ENCODE measurements at regions of chr12 and their contacts with region 1.

Region 1: DNA sequence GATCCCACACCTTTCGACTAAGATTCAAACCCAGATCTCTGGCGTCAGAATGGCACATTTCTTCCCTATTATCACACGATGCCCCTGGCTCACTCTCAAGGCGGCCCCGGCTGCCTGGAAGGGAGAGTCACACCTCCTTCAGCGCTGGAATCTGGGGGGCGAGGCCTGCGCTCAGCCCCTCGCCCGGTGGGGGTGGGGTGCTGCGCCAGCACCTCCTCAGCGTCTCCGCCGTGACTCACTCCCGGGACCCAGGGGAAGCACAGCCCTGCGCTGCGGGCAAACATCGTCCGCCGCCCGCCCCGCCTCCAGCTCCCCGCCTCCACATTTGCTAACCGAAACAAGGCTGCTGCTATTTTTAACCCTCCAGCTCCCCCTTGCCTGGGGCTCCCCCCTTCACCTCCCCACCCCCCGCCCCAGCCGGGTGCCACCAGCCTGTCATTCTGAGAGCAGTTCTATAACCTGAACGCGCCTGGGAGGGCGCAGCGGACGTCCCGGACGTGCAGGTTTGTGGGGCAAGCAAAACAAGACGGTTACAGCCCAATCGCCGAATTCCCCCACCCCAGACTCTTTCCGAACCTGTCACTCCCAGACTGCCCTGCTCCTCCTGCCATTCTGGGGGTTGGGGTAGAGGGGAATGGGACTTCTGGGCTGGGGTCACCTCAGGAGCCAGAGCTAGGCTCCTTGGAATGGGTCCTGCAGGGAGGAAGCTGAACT is 6.7 kb downstream of the HDAC7 start:
- H3K4me3 ChIP-seq: peak overlapping the region; percentile 28
- H3K27ac ChIP-seq: peak overlapping the region; percentile 66
- H3K4me1 ChIP-seq: peaks cover 27% of the 10 kb centered on the region
- CTCF ChIP-seq: no peak

Region 2: DNA sequence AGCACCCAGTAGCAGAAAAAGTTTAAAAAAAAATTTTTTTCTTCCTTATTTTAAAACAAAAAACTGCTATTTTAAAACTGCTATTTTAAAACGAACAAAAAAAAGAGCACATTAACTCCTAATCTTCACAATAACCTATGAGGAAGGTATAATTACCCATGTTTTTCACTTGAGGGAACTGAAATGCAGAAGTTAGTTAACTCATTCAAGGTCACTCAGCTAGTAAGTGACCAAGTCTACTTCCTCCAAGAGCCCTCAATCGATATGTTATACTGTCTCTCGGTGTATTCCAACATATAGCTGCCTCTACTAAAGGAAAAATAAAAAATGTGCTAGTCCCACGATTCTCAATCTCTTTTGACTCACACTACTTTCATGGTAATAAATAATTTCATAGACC is 114.9 kb before region 1 on chr12:
- CTCF ChIA-PET with region 1: no interaction called
- POLR2A ChIA-PET with region 1: no interaction called
- H3K4me3 ChIP-seq: no peak overlapping the region
- H3K27ac ChIP-seq: no peak overlapping the region
- H3K4me1 ChIP-seq: no peaks in the 10 kb centered on the region
- CTCF ChIP-seq: no peak

Region 3: DNA sequence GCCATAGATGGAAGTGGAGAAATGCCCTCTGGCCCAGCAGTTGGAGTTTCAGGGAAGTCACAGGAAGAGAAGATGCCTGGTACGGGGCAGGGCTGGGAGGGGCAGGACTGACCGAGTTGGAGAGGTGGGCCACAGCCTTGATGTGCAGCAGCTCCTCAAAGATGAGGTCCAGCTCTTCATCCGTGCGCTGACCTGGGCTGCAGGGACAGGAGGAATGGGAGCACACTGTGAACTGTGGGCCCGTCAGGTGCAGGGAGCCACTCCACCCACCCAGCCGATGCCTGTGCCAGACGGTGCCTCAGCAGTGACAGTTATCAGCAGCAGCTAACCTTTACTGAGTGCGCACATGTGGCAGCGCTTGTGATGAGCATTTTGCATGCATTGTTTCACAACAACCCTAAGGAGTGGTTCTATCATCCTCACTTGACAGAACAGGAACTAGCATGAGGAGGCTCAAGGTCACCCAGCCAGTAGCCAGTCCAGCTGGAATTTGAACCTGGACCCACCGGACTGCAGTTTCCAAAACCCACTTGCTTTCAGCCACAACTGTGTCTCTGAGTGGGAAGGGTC is 62.6 kb before region 1 on chr12:
- CTCF ChIA-PET with region 1: no interaction called
- POLR2A ChIA-PET with region 1: no interaction called
- H3K4me3 ChIP-seq: no peak overlapping the region
- H3K27ac ChIP-seq: no peak overlapping the region
- H3K4me1 ChIP-seq: peaks cover 4% of the 10 kb centered on the region; the same call in 1 of the 2 replicates
- CTCF ChIP-seq: no peak

Region 4: DNA sequence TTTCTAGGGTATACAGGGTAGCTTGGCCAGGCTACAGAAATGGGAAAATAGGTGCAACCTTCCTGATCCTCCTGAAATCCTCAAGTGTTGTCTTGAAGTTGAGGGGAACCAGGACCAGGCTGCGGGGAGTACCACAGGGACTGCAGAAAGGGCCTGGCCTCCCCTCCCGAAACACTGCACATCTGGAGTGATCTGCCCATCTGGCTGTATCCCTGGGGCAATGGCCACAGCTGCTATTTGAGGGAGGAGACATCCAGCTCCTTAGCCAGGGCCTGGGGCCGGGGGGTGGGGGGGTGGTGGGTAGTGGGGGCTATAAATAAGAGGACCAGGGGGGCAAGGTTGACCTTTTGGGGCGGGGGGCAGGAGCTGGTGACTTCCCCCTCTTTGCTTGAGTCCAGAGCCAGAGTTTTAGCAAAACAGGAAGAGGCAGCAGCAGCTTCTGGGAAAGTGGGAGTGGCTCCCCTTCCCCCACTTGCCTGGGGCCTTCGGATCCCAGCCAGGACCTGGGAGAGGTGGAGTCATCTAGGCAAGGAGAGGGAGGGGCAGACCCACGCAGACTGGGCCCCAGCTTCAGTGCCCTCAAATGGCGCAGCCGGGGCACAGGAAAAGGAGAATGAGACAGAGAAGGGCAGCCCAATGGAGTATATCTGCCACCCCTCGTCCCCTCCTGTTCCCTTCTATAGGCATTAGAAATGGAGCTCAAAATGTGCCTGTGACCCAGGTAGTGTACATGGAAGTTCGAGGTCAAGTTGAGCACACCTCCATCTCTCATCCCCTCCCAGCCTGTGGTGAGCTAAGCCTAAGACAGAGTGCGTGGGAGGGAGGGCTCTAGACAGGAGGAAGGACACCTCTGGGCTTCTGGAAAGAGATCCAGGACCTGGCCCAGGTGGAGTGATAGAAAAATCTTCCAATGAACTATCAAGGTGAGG is 15.9 kb after region 1 on chr12:
- CTCF ChIA-PET with region 1: interaction called, 234 read pairs
- POLR2A ChIA-PET with region 1: interaction called, 15 read pairs
- H3K4me3 ChIP-seq: peak overlapping the region; percentile 6
- H3K27ac ChIP-seq: peak overlapping the region; percentile 48; the same call in 1 of the 2 replicates
- H3K4me1 ChIP-seq: peaks cover 3% of the 10 kb centered on the region
- CTCF ChIP-seq: no peak

Measured in HEK293 (cell line).